ENCODE measurements at regions of chr19 and their contacts with region 1.

Region 1: GRCh38 chr19:20923077-20923871 is at the start of gene ZNF85:
- DNase-seq: peak; percentile 69 to 95 (median 92)
- ATAC-seq: peak; percentile 99
- H3K4me3 ChIP-seq: peak within 1 kb of the TSS; percentile 66
- H3K4me3 Mint-ChIP-seq: peak within 1 kb of the TSS; percentile 92 to 98 (median 95)
- H3K27ac ChIP-seq: peak within 1 kb of the TSS; percentile 63
- H3K27ac Mint-ChIP-seq: peak within 1 kb of the TSS; percentile 87 to 98 (median 93)
- H3K4me1 ChIP-seq: peaks cover 0 to 4% of the 10 kb centered on the region in 2 donors
- H3K4me1 Mint-ChIP-seq: peaks cover 4 to 28% (median 14%) of the 10 kb centered on the region in 7 donors
- H3K27me3 ChIP-seq: no peaks in the 10 kb centered on the region
- H3K27me3 Mint-ChIP-seq: no peaks in the 10 kb centered on the region
- total RNA-seq, gene ZNF85: 4.3 to 10.4 (median 7.3) TPM

Region 2: GRCh38 chr19:19732579-19733501 is 1190.4 kb before region 1 on chr19 and contains the start of gene ZNF14:
- CTCF ChIA-PET with region 1: no interaction called
- POLR2A ChIA-PET with region 1: no interaction called
- intact Hi-C with region 1: loop called in 1 of 2 experiments (anchors 10 kb)
- DNase-seq: peak; percentile 69 to 91 (median 89)
- ATAC-seq: peak; percentile 100
- H3K4me3 ChIP-seq: peak within 1 kb of the TSS; percentile 78
- H3K4me3 Mint-ChIP-seq: peak within 1 kb of the TSS; percentile 93 to 100 (median 98)
- H3K27ac ChIP-seq: peak within 1 kb of the TSS; percentile 87
- H3K27ac Mint-ChIP-seq: peak within 1 kb of the TSS; percentile 93 to 98 (median 95)
- H3K4me1 ChIP-seq: peaks cover 3 to 7% of the 10 kb centered on the region in 2 donors
- H3K4me1 Mint-ChIP-seq: peaks cover 16 to 39% (median 21%) of the 10 kb centered on the region in 7 donors
- H3K27me3 ChIP-seq: no peaks in the 10 kb centered on the region
- H3K27me3 Mint-ChIP-seq: no peaks in the 10 kb centered on the region
- total RNA-seq, gene ZNF14: 7.0 to 35.0 (median 30.3) TPM

Region 3: GRCh38 chr19:20237761-20238623 is 685.3 kb before region 1 on chr19:
- CTCF ChIA-PET with region 1: no interaction called
- POLR2A ChIA-PET with region 1: no interaction called
- intact Hi-C with region 1: loop called in 1 of 2 experiments (anchors 1 kb)
- DNase-seq: peak; percentile 70 to 90 (median 83)
- ATAC-seq: peak; percentile 97
- H3K4me3 ChIP-seq: peak overlapping the region; percentile 71
- H3K4me3 Mint-ChIP-seq: peak overlapping the region; percentile 83 to 98 (median 96)
- H3K27ac ChIP-seq: peak overlapping the region; percentile 63
- H3K27ac Mint-ChIP-seq: peak overlapping the region; percentile 55 to 95 (median 87)
- H3K4me1 ChIP-seq: peaks cover 0 to 4% of the 10 kb centered on the region in 2 donors
- H3K4me1 Mint-ChIP-seq: peaks cover 5 to 12% (median 10%) of the 10 kb centered on the region in 7 donors
- H3K27me3 ChIP-seq: no peaks in the 10 kb centered on the region
- H3K27me3 Mint-ChIP-seq: no peaks in the 10 kb centered on the region

Region 4: GRCh38 chr19:20431826-20432225 is 491.4 kb before region 1 on chr19:
- CTCF ChIA-PET with region 1: no interaction called
- POLR2A ChIA-PET with region 1: no interaction called
- intact Hi-C with region 1: no loop called
- DNase-seq: no peak
- ATAC-seq: no peak
- H3K4me3 ChIP-seq: no peak overlapping the region
- H3K4me3 Mint-ChIP-seq: no peak overlapping the region
- H3K27ac ChIP-seq: no peak overlapping the region
- H3K27ac Mint-ChIP-seq: no peak overlapping the region
- H3K4me1 ChIP-seq: no peaks in the 10 kb centered on the region
- H3K4me1 Mint-ChIP-seq: peaks cover 0 to 5% (median 0%) of the 10 kb centered on the region in 7 donors
- H3K27me3 ChIP-seq: no peaks in the 10 kb centered on the region
- H3K27me3 Mint-ChIP-seq: no peaks in the 10 kb centered on the region

Region 5: GRCh38 chr19:20565321-20566018 is 357.8 kb before region 1 on chr19 and contains the start of gene ZNF737:
- CTCF ChIA-PET with region 1: no interaction called
- POLR2A ChIA-PET with region 1: interaction called, 3 read pairs
- intact Hi-C with region 1: loop called in 1 of 2 experiments (anchors 1 kb)
- DNase-seq: peak; percentile 78 to 95 (median 89)
- ATAC-seq: peak; percentile 97
- H3K4me3 ChIP-seq: peak within 1 kb of the TSS; percentile 92
- H3K4me3 Mint-ChIP-seq: peak within 1 kb of the TSS; percentile 94 to 100 (median 99)
- H3K27ac ChIP-seq: peak within 1 kb of the TSS; percentile 82
- H3K27ac Mint-ChIP-seq: peak within 1 kb of the TSS; percentile 94 to 99 (median 97)
- H3K4me1 ChIP-seq: no peaks in the 10 kb centered on the region
- H3K4me1 Mint-ChIP-seq: peaks cover 0 to 39% (median 37%) of the 10 kb centered on the region in 7 donors
- H3K27me3 ChIP-seq: no peaks in the 10 kb centered on the region
- H3K27me3 Mint-ChIP-seq: no peaks in the 10 kb centered on the region
- total RNA-seq, gene ZNF737: 13.3 to 43.2 (median 14.9) TPM

Region 6: DNA sequence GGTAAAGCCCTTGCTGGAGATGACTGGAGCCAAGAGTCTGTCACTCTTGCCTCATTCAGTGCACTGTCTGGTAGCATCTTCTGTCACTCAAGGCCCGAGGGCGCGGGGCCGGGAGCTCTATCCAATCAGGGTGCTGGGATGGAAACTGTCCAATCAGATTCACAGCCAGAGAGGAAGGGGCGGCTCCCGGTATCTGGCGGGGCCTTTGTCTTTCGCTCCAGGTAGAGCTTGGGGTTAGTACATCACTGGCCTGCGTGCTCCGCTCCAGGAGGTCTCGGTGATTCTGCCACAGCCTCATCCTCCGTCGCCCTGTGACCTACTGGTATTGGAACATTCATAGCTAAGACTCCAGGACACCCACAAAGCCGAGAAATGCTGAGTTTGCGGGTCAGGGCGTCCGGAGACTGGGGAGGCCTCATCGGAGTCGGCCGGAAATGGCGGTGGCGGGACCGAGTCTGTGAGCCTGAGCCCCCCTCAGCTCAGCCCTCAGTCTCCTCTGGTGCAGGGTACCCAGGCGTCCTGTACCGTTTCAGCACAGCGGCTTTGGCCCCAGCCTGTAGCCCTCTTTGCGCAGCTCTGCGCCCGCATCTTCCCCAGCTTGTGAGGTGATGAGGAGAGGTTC is 76.6 kb after region 1 on chr19:
- CTCF ChIA-PET with region 1: no interaction called
- POLR2A ChIA-PET with region 1: interaction called, 9 read pairs
- intact Hi-C with region 1: loop called (anchors 1 kb)
- DNase-seq: peak; percentile 64 to 92 (median 86)
- ATAC-seq: peak; percentile 100
- H3K4me3 ChIP-seq: peak overlapping the region; percentile 67
- H3K4me3 Mint-ChIP-seq: peak overlapping the region; percentile 76 to 92 (median 85)
- H3K27ac ChIP-seq: no peak overlapping the region
- H3K27ac Mint-ChIP-seq: peak overlapping the region in 5 of 9 donors; percentile 36 to 87 (median 47)
- H3K4me1 ChIP-seq: no peaks in the 10 kb centered on the region
- H3K4me1 Mint-ChIP-seq: peaks cover 5 to 16% (median 7%) of the 10 kb centered on the region in 7 donors
- H3K27me3 ChIP-seq: no peaks in the 10 kb centered on the region
- H3K27me3 Mint-ChIP-seq: no peaks in the 10 kb centered on the region

Region 7: DNA sequence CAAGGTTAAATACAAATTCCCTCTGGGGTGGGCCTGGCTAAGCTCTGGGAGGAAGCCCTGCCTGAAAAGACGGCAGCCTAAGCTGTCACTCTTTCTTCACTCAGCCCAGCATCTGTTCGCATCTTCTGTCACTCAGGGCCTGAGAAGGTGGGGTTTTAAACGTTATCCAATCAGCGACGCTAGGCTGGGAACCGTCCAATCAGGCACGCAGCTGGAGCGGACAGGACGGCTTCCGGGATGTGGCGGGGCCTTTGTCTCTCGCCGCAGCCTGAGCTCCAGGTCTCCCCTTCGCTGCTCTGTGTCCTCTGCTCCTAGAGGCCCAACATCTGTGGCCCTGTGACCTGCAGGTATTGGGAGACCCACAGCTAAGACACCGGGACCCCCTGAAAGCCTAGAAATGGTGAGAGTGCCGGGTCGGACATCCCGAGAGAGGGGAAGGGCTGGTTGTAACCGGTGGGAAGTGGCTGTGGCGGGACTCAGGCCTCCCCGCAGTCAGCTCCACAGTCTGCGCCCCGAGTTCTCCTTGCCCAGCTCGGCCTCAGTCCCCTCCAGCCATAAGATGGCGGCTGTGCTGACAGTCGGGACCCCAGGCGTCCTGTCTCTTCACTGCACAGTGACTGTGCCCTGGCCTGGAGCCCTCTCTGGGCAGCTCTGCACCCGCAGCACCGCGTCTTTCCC is 218.7 kb after region 1 on chr19 and contains the start of gene ZNF431:
- CTCF ChIA-PET with region 1: no interaction called
- POLR2A ChIA-PET with region 1: interaction called, 10 read pairs
- intact Hi-C with region 1: loop called (anchors 1 to 10 kb)
- DNase-seq: peak; percentile 63 to 95 (median 91)
- ATAC-seq: peak; percentile 100
- H3K4me3 ChIP-seq: peak within 1 kb of the TSS; percentile 94
- H3K4me3 Mint-ChIP-seq: peak within 1 kb of the TSS; percentile 95 to 98 (median 97)
- H3K27ac ChIP-seq: peak within 1 kb of the TSS; percentile 91
- H3K27ac Mint-ChIP-seq: peak within 1 kb of the TSS; percentile 93 to 99 (median 96)
- H3K4me1 ChIP-seq: peaks cover 3 to 6% of the 10 kb centered on the region in 2 donors
- H3K4me1 Mint-ChIP-seq: peaks cover 20 to 69% (median 54%) of the 10 kb centered on the region in 7 donors
- H3K27me3 ChIP-seq: no peaks in the 10 kb centered on the region
- H3K27me3 Mint-ChIP-seq: no peaks in the 10 kb centered on the region
- total RNA-seq, gene ZNF431: 19.1 to 36.8 (median 25.4) TPM

Region 8: DNA sequence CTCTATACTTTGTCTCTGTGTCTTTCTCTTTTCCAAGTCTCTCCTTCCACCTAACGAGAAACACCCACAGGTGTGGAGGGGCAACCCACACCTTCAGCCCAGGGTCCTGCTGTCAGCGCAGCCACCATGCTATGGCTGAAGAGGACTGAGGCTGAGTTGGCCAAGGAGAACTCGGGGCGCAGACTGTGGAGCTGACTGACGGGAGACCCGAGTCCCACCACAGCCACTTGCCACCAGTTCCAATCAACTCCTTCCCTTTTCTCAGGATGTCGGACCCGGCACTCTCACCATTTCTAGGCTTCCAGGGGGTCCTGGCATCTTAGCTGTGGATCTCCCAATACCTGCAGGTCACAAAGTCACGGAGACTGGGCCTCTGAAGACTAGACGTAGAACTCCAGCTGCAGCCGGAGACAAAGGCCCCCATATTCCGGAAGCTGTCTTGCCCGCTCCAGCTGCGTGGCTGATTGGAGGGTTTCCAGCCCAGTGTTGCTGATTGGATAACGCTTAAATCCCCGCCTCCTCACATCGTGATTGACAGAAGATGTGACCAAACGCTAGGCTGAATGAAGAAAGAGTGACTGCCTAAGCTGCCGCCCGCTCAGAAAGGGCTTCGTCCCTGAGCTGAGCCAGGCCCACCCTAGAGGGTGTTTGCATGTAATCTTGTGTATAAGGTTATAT is 645.7 kb after region 1 on chr19:
- CTCF ChIA-PET with region 1: no interaction called
- POLR2A ChIA-PET with region 1: no interaction called
- intact Hi-C with region 1: loop called in 1 of 2 experiments (anchors 2 kb)
- DNase-seq: peak; percentile 54 to 94 (median 89)
- ATAC-seq: peak; percentile 99
- H3K4me3 ChIP-seq: peak overlapping the region; percentile 64
- H3K4me3 Mint-ChIP-seq: peak overlapping the region; percentile 85 to 99 (median 94)
- H3K27ac ChIP-seq: peak overlapping the region; percentile 71
- H3K27ac Mint-ChIP-seq: peak overlapping the region; percentile 94 to 99 (median 96)
- H3K4me1 ChIP-seq: no peaks in the 10 kb centered on the region
- H3K4me1 Mint-ChIP-seq: peaks cover 0 to 44% (median 24%) of the 10 kb centered on the region in 7 donors
- H3K27me3 ChIP-seq: no peaks in the 10 kb centered on the region
- H3K27me3 Mint-ChIP-seq: no peaks in the 10 kb centered on the region

Region 9: GRCh38 chr19:21604351-21604926 is 681.2 kb after region 1 on chr19:
- CTCF ChIA-PET with region 1: no interaction called
- POLR2A ChIA-PET with region 1: no interaction called
- intact Hi-C with region 1: no loop called
- DNase-seq: peak in 6 of 9 donors; percentile 24 to 55 (median 49)
- ATAC-seq: peak; percentile 67
- H3K4me3 ChIP-seq: peak overlapping the region; percentile 65
- H3K4me3 Mint-ChIP-seq: peak overlapping the region; percentile 80 to 96 (median 92)
- H3K27ac ChIP-seq: peak overlapping the region; percentile 73
- H3K27ac Mint-ChIP-seq: peak overlapping the region; percentile 84 to 97 (median 96)
- H3K4me1 ChIP-seq: peaks cover 0 to 9% of the 10 kb centered on the region in 2 donors
- H3K4me1 Mint-ChIP-seq: peaks cover 17 to 31% (median 21%) of the 10 kb centered on the region in 7 donors
- H3K27me3 ChIP-seq: no peaks in the 10 kb centered on the region
- H3K27me3 Mint-ChIP-seq: no peaks in the 10 kb centered on the region